AG04449 (cell line): ENCODE measurements at regions of chr11 and their contacts with region 1.

Region 1: GRCh38 chr11:128630367-128631230 is 43.2 kb upstream of the ETS1 start:
- DNase-seq: peak; percentile 31
- H3K4me3 ChIP-seq: no peak overlapping the region
- CTCF ChIP-seq: peak; percentile 66

Region 2: GRCh38 chr11:128279866-128280265 is 350.7 kb before region 1 on chr11:
- CTCF ChIA-PET with region 1: interaction called, 40 read pairs
- POLR2A ChIA-PET with region 1: no interaction called
- DNase-seq: peak; percentile 34
- H3K4me3 ChIP-seq: no peak overlapping the region
- CTCF ChIP-seq: no peak

Region 3: GRCh38 chr11:128323381-128323780 is 307.2 kb before region 1 on chr11:
- CTCF ChIA-PET with region 1: interaction called, 23 read pairs
- POLR2A ChIA-PET with region 1: no interaction called
- DNase-seq: no peak
- H3K4me3 ChIP-seq: no peak overlapping the region
- CTCF ChIP-seq: peak; percentile 40

Region 4: DNA sequence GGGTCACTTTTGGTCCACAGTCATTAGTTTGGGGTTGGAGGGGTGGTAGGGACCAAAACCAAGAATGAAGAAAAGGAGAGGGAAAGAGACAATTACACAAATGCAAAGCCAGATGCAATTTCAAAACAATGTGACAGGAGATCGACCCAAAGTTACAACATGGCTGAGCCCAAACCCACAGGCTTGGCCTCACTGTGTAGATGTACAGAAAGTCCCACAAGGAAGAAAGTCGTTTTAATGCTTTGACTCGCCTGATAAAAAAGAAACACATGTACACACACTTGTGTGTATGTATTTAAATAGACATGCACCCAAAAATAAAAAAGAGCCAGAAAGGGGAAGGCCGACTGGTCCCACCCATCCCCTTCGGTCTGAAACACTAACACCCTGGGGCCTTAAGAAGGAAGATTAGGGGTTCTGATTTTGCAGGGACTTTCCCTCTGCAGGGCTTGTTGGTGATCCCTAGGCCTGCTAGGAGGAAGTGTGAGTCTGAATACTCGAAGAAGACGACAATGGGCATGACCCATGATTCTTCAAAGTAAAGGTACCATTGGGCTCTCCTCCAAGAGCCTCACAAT is 147.3 kb before region 1 on chr11:
- CTCF ChIA-PET with region 1: interaction called, 25 read pairs
- POLR2A ChIA-PET with region 1: no interaction called
- DNase-seq: no peak
- H3K4me3 ChIP-seq: no peak overlapping the region
- CTCF ChIP-seq: no peak

Region 5: GRCh38 chr11:128522055-128522942 is 108.3 kb before region 1 on chr11:
- CTCF ChIA-PET with region 1: interaction called, 106 read pairs
- POLR2A ChIA-PET with region 1: no interaction called
- DNase-seq: peak; percentile 97
- H3K4me3 ChIP-seq: peak overlapping the region; percentile 82
- CTCF ChIP-seq: no peak

Region 6: DNA sequence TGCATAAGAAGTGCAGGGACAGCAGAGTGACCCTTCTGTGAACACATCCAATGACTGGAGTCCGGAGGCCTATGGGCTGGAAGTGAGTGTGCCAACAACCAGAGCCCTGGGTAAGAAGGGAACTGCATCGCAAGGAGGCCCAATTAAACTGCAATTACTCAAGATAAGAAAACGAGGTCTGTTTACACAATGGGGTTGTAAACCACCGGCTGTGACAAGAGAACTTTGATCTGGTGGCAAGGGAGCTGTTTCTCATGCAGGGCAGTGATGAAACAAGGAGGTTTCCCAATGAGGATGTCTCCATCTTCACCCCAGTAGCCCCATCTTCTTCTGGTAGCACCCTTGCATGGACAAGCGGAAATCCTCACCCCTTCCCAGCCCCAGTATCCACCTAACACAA is 64.7 kb before region 1 on chr11:
- CTCF ChIA-PET with region 1: no interaction called
- POLR2A ChIA-PET with region 1: no interaction called
- DNase-seq: no peak
- H3K4me3 ChIP-seq: no peak overlapping the region
- CTCF ChIP-seq: no peak

Region 7: DNA sequence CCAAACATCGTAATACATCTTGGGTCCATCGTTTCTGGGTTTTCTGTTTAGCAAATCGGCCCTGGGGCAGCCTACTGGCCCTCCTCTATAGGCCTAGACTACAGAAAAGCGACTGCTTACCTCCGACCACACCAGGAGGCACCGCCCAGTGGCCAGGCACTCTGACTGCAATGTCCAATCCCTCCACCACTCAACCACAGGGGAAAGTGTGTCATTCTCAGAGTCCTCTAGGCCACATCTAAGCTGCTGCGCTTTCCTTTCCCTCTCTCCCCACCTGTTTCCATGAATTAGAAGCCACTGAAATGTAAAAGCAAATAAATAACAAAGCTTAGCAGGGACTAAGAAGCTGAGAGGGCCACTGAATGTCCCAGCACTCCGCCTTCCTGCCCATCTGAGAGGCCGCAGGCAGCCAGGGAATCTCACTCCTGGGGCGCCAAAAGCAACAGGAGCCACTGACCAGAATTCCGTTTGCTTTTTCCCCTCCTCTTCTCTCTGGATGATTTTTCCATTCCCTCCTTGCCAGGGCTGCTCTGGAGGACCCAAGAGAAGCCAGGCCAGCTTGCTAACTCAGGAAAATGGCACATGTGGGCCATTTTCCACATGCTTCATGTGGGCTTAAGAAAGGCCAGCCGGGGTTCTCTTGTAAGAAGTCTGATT is 13.2 kb after region 1 on chr11:
- CTCF ChIA-PET with region 1: interaction called, 61 read pairs
- POLR2A ChIA-PET with region 1: no interaction called
- DNase-seq: no peak
- H3K4me3 ChIP-seq: no peak overlapping the region
- CTCF ChIP-seq: no peak